Psoas muscle (tissue), 8 donors: ENCODE measurements at regions of chr5 and their contacts with region 1.

Region 1: GRCh38 chr5:59673438-59674058 is 220.0 kb downstream of the PDE4D start:
- DNase-seq: no peak
- ATAC-seq: peak; percentile 30 to 80 (median 60)
- H3K4me3 ChIP-seq: no peak overlapping the region
- H3K27ac ChIP-seq: no peak overlapping the region
- H3K4me1 ChIP-seq: peaks cover 12% of the 10 kb centered on the region
- H3K27me3 ChIP-seq: no peaks in the 10 kb centered on the region
- CTCF ChIP-seq: peak; percentile 89

Region 2: GRCh38 chr5:59020611-59021285 is 652.8 kb before region 1 on chr5:
- intact Hi-C with region 1: no loop called
- DNase-seq: no peak
- ATAC-seq: peak in 1 of 4 donors; percentile 3
- H3K4me3 ChIP-seq: peak overlapping the region; percentile 22
- H3K27ac ChIP-seq: peak overlapping the region; percentile 82
- H3K4me1 ChIP-seq: peaks cover 36% of the 10 kb centered on the region
- H3K27me3 ChIP-seq: no peaks in the 10 kb centered on the region
- CTCF ChIP-seq: no peak

Region 3: GRCh38 chr5:59188419-59189225 is 484.9 kb before region 1 on chr5:
- intact Hi-C with region 1: loop called (anchors 5 to 10 kb)
- DNase-seq: peak; percentile 67 to 81
- ATAC-seq: peak; percentile 56 to 70 (median 64)
- H3K4me3 ChIP-seq: peak overlapping the region; percentile 47
- H3K27ac ChIP-seq: peak overlapping the region; percentile 85
- H3K4me1 ChIP-seq: peaks cover 74% of the 10 kb centered on the region
- H3K27me3 ChIP-seq: no peaks in the 10 kb centered on the region
- CTCF ChIP-seq: peak; percentile 86

Region 4: DNA sequence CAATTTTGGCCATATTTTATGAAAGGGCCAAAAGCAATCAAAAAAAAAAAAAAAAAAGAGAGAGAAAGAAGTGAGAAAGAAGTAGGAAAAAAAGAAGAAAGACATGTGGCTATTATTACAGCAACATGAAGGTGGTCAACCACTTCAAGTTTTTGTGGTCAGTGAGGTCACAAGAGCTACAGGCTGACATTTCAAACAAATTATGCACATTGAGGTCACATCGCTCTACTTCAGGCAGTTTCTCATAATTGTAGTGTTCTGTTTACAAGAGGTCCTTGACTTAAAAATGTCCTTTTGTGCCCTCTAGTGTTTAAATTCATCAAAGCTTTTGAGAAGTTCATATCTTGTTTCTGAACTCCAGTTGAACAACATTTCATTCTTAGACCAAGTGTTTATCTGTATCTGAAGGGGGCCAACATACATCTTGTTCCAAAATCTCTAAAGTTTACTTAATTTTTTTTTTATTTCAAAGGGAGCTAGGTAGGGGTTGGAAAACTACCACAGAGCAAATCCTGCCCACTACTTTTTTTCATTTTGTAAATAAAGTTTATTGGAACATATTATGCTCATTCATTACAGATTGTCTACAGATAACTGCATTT is 293.1 kb before region 1 on chr5:
- intact Hi-C with region 1: loop called in 1 of 2 experiments (anchors 10 kb)
- DNase-seq: no peak
- ATAC-seq: peak; percentile 42 to 67 (median 59)
- H3K4me3 ChIP-seq: no peak overlapping the region
- H3K27ac ChIP-seq: peak overlapping the region; percentile 13
- H3K4me1 ChIP-seq: no peaks in the 10 kb centered on the region
- H3K27me3 ChIP-seq: no peaks in the 10 kb centered on the region
- CTCF ChIP-seq: peak; percentile 50

Region 5: GRCh38 chr5:59390074-59390659 is 283.4 kb before region 1 on chr5:
- intact Hi-C with region 1: loop called (anchors 2 to 10 kb)
- DNase-seq: no peak
- ATAC-seq: no peak
- H3K4me3 ChIP-seq: no peak overlapping the region
- H3K27ac ChIP-seq: peak overlapping the region; percentile 38
- H3K4me1 ChIP-seq: peaks cover 6% of the 10 kb centered on the region
- H3K27me3 ChIP-seq: no peaks in the 10 kb centered on the region
- CTCF ChIP-seq: peak; percentile 76

Region 6: DNA sequence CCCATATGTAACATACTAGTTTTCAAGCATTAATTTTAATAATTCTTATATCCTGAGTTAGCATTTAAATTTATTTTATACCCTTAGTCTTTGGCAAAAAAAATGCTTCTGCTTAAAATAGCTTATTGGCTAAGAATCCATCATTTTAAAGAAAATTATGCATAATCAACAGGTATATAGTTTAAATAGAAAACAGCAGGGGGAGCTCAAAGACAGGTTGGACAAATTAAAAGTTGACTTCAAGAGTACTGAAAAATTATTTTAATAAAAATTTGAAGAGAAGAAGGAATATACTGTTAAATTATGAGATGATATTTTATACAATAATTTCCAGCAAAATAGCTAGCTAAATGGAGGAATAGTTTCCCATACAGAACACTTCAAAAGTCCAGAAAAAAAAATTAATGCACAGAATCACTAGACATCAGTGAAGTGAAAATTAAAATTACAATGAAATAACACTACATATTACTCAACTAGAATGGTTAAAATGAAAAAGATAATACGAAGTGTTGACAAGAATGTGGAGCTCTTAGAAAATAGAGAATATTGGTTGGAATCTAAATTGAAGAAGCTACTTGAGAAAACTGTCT is 167.2 kb before region 1 on chr5:
- intact Hi-C with region 1: loop called in 1 of 2 experiments (anchors 5 kb)
- DNase-seq: no peak
- ATAC-seq: no peak
- H3K4me3 ChIP-seq: no peak overlapping the region
- H3K27ac ChIP-seq: no peak overlapping the region
- H3K4me1 ChIP-seq: peaks cover 41% of the 10 kb centered on the region
- H3K27me3 ChIP-seq: no peaks in the 10 kb centered on the region
- CTCF ChIP-seq: peak; percentile 66